ENCODE measurements at regions of chr1 and their contacts with region 1.

Region 1: GRCh38 chr1:35726450-35727433 is 8.1 kb upstream of the C1orf216 start:
- H3K4me3 ChIP-seq: no peak overlapping the region
- H3K27ac ChIP-seq: 0 out of 2 replicates have a peak overlapping the region, but pooled peaks have one; percentile 11
- H3K4me1 ChIP-seq: no peaks in the 10 kb centered on the region
- CTCF ChIP-seq: peak; percentile 77

Region 2: GRCh38 chr1:35524106-35524505 is 202.6 kb before region 1 on chr1:
- CTCF ChIA-PET with region 1: no interaction called
- POLR2A ChIA-PET with region 1: no interaction called
- H3K4me3 ChIP-seq: no peak overlapping the region
- H3K27ac ChIP-seq: no peak overlapping the region
- H3K4me1 ChIP-seq: no peaks in the 10 kb centered on the region
- CTCF ChIP-seq: no peak

Region 3: GRCh38 chr1:35557292-35558063 is 169.3 kb before region 1 on chr1 and contains the starts of genes KIAA0319L and NCDN:
- CTCF ChIA-PET with region 1: interaction called, 10 read pairs
- POLR2A ChIA-PET with region 1: no interaction called
- H3K4me3 ChIP-seq: peak within 1 kb of the TSS; percentile 95
- H3K27ac ChIP-seq: peak within 1 kb of the TSS; percentile 96
- H3K4me1 ChIP-seq: peaks cover 27% of the 10 kb centered on the region
- CTCF ChIP-seq: no peak

Region 4: DNA sequence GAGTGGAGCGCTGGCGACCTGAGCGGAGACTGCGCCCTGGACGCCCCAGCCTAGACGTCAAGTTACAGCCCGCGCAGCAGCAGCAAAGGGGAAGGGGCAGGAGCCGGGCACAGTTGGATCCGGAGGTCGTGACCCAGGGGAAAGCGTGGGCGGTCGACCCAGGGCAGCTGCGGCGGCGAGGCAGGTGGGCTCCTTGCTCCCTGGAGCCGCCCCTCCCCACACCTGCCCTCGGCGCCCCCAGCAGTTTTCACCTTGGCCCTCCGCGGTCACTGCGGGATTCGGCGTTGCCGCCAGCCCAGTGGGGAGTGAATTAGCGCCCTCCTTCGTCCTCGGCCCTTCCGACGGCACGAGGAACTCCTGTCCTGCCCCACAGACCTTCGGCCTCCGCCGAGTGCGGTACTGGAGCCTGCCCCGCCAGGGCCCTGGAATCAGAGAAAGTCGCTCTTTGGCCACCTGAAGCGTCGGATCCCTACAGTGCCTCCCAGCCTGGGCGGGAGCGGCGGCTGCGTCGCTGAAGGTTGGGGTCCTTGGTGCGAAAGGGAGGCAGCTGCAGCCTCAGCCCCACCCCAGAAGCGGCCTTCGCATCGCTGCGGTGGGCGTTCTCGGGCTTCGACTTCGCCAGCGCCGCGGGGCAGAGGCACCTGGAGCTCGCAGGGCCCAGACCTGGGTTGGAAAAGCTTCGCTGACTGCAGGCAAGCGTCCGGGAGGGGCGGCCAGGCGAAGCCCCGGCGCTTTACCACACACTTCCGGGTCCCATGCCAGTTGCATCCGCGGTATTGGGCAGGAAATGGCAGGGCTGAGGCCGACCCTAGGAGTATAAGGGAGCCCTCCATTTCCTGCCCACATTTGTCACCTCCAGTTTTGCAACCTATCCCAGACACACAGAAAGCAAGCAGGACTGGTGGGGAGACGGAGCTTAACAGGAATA is 149.4 kb before region 1 on chr1:
- CTCF ChIA-PET with region 1: interaction called, 51 read pairs
- POLR2A ChIA-PET with region 1: no interaction called
- H3K4me3 ChIP-seq: no peak overlapping the region
- H3K27ac ChIP-seq: no peak overlapping the region
- H3K4me1 ChIP-seq: no peaks in the 10 kb centered on the region
- CTCF ChIP-seq: no peak

Region 5: DNA sequence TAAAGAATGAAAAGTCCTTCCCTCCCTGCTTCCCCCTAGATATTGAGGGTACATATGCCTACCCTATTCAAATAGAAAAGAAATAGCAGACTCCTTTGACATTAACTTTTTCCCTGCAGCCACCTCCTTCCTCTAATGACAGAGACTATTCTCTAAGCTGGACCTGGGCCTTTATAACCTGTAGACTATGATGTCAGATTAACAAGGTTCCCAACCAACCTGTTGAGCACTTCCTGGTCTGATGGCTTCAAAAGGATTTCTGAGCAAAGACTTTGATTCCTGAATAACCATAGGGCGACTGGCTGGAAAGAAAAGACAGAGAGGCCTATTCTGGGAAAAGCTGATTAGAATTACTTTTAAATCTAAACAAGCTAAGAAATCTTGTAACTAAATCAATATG is 10.4 kb after region 1 on chr1:
- CTCF ChIA-PET with region 1: interaction called, 31 read pairs
- POLR2A ChIA-PET with region 1: no interaction called
- H3K4me3 ChIP-seq: no peak overlapping the region
- H3K27ac ChIP-seq: no peak overlapping the region
- H3K4me1 ChIP-seq: no peaks in the 10 kb centered on the region
- CTCF ChIP-seq: no peak

Region 6: GRCh38 chr1:35747938-35748702 is 21.4 kb after region 1 on chr1:
- CTCF ChIA-PET with region 1: interaction called, 13 read pairs
- POLR2A ChIA-PET with region 1: no interaction called
- H3K4me3 ChIP-seq: no peak overlapping the region
- H3K27ac ChIP-seq: no peak overlapping the region
- H3K4me1 ChIP-seq: no peaks in the 10 kb centered on the region
- CTCF ChIP-seq: no peak

Measured in HEK293 (cell line).